Sigmoid colon (tissue), 7 donors: ENCODE measurements at regions of chr11 and their contacts with region 1.

Region 1: DNA sequence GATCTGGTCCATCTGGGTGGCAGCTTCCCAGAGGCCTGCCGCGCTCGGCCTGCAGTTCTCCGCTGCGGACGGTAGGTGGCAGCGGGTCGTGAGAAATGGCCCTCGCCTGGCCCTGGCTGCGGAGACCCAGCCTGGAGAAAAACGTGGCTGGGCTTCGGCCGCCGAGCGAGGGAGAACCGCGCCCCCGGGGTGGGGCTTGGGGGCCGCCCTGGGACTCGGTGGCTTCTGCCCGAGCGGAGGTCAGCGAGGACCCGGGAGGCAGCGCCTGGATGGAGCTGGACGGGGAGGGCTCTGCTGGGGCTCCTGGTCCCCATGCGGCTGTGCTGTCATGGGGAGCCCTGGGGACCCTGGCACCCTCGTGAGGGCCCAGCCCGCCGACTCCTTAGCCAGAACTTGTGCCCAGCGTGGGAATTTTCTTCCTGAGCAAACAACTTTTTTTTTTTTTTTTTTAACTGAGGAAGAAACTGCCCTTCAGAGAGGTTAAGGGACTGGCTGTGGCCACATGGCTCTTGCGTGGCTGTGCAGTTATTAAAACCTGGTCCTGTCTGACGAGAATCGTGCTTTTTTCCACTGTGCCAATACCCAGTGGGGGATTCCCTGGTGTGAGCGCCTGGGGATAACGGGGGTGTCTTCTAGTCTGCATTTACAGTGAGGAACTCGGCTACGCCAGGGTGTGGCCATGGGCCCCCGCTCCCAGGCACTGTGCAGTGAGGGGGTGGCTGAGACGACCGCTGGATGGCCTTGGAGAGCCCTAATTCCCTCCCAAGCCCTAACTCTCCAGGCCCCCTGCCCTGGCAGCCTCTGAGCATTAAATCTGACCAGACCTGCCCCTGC is 535.6 kb downstream of the INSC start:
- DNase-seq: peak; percentile 95
- H3K4me3 ChIP-seq: peak overlapping the region; percentile 20 to 50 (median 42)
- H3K27ac ChIP-seq: peak overlapping the region; percentile 52 to 62 (median 60)
- H3K4me1 ChIP-seq: peaks cover 0 to 14% (median 9%) of the 10 kb centered on the region in 4 donors
- H3K27me3 ChIP-seq: peaks cover 0 to 11% (median 0%) of the 10 kb centered on the region in 3 donors
- CTCF ChIP-seq: peak; percentile 92 to 96 (median 95)
- EP300 ChIP-seq: no peak
- POLR2A ChIP-seq: no peak

Region 2: DNA sequence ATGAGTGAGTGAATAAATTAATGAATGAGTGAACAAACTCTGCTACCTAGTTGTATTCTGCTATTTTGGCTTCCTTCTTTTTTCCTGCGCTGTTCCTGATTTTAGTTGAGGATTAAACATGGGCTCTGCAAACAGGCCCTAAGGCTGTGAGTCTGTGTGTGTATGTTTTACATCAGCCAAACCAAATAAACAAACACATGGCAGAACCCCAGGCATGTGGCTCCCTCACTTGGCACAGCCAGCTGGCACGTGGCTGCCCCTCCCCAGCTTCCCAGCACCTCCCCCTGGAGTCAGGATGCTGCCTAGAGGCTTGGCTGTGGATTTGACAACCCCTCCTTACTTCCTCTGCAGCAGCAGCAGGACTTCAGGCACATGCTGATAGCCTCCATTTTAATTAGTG is 57.6 kb after region 1 on chr11:
- intact Hi-C with region 1: no loop called
- DNase-seq: no peak
- H3K4me3 ChIP-seq: no peak overlapping the region
- H3K27ac ChIP-seq: no peak overlapping the region
- H3K4me1 ChIP-seq: peaks cover 0 to 11% (median 3%) of the 10 kb centered on the region in 4 donors
- H3K27me3 ChIP-seq: no peaks in the 10 kb centered on the region
- CTCF ChIP-seq: no peak
- EP300 ChIP-seq: no peak
- POLR2A ChIP-seq: no peak

Region 3: GRCh38 chr11:15742626-15743519 is 92.6 kb after region 1 on chr11:
- intact Hi-C with region 1: no loop called
- DNase-seq: no peak
- H3K4me3 ChIP-seq: no peak overlapping the region
- H3K27ac ChIP-seq: no peak overlapping the region
- H3K4me1 ChIP-seq: no peaks in the 10 kb centered on the region
- H3K27me3 ChIP-seq: no peaks in the 10 kb centered on the region
- CTCF ChIP-seq: no peak
- EP300 ChIP-seq: no peak
- POLR2A ChIP-seq: no peak

Region 4: DNA sequence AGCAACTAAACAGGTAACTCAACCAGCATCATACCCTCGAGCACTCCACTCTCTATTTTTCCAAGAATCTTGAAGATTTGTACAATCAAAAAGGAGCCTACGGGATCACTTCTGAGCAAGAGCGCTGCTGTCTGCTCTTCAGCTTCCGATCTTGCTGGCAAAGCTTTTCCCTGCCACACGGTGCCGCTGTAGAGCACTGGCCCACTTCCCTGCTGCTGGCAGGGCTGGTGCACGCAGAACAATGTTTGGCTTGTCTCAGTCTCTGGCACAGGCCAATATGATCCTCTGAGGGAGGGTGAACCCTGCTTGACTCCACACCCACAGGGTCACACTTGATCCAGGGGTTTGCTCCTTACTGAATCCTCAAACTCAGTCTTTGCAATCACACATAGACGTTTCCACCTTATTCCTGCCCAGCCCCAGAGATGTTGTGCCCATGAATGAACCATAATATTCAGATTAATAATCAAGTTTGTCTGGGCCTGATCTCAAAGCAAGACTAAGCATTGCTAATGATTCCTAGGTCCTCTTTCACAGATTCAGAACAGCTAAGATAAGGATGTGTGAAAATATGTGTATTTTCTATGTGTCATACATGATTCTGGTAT is 169.5 kb after region 1 on chr11:
- intact Hi-C with region 1: loop called (anchors 10 kb)
- DNase-seq: peak; percentile 77
- H3K4me3 ChIP-seq: no peak overlapping the region
- H3K27ac ChIP-seq: no peak overlapping the region
- H3K4me1 ChIP-seq: peaks cover 0 to 30% (median 24%) of the 10 kb centered on the region in 4 donors
- H3K27me3 ChIP-seq: no peaks in the 10 kb centered on the region
- CTCF ChIP-seq: peak; percentile 44 to 81 (median 78)
- EP300 ChIP-seq: no peak
- POLR2A ChIP-seq: no peak

Region 5: DNA sequence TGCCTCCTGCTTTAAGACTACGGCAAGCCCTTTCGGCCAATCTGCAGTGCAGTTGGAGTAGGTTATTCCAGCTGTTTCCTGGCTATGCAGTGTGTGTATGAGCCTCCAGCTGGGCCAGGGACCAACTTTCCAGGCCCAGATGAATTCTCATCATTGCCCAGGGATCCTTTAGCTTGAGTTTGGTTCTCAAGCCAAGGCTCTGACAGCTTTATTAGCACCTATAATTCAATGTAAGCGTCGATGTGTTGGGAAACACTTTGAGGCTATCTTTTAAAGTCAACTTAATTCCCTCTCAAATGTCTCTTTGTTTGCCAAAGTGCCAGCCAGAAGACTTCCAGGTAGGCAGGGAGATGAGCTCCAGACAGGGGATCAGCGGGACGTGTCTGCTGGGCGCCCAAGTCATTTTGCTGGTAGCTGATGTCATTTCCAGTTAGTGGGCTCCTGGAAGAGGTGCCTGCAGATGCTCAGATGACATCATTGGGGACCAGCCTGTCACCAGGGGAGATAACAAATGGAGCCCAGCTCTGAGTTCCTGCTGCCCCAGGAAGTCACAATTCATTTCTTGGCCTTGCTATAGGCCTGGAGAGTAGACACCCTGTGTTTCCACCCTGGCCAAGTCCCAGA is 185.6 kb after region 1 on chr11:
- intact Hi-C with region 1: loop called (anchors 10 kb)
- DNase-seq: peak; percentile 83
- H3K4me3 ChIP-seq: no peak overlapping the region
- H3K27ac ChIP-seq: peak overlapping the region in 3 of 4 donors; percentile 13 to 64 (median 47)
- H3K4me1 ChIP-seq: peaks cover 0 to 11% (median 5%) of the 10 kb centered on the region in 4 donors
- H3K27me3 ChIP-seq: peaks cover 0 to 19% (median 0%) of the 10 kb centered on the region in 3 donors
- CTCF ChIP-seq: no peak
- EP300 ChIP-seq: peak; percentile 27 to 88 (median 76)
- POLR2A ChIP-seq: no peak

Region 6: DNA sequence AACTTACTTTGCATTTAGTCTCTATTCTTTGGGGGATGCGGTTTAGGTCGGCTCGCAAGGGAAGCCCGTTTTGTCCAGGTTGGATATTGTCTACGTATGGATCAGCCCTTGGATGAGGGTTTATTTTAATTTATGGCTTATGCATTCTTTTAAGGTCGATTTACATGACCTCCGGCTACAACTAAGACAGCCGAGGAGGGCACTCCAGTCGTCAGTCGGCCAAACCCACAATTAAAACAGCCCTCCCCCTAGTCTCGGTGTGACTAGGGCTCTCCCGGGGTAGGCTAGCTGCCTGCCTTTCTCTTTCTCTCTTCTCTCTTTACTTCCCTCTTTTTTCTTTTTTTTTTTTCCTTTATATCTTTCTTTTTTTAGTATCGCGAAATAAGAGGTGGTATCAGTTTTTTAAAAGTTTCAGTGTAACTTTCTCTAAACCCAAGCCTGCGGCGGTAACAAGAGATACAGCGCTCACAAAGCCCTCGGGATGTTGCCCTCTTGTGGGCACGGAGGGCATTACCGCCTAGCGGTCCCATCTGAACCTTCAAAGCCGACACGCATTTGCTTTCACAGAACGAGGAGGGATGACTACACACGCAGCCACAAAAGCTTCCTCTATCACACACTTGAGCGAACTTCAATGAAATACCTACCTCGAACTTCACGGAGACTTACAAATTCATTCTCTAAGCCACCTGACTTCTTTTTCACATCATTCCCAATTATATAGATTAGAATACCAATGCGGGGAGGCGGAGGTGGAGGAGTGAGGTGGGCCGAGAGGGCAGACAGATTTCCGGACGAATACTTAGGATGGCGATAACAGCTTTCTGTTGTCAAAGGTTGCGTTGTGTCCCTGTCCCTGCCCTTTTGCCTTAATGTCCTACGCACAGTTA is 955.8 kb after region 1 on chr11:
- intact Hi-C with region 1: loop called (anchors 2 kb)
- DNase-seq: peak; percentile 91
- H3K4me3 ChIP-seq: peak overlapping the region; percentile 34 to 56 (median 48)
- H3K27ac ChIP-seq: peak overlapping the region; percentile 59 to 73 (median 67)
- H3K4me1 ChIP-seq: peaks cover 0 to 43% (median 39%) of the 10 kb centered on the region in 4 donors
- H3K27me3 ChIP-seq: peaks cover 46 to 99% (median 83%) of the 10 kb centered on the region in 3 donors
- CTCF ChIP-seq: peak; percentile 76 to 96 (median 86)
- EP300 ChIP-seq: no peak
- POLR2A ChIP-seq: peak in 1 of 2 donors; percentile 21

Region 7: GRCh38 chr11:16613512-16614381 is 963.4 kb after region 1 on chr11:
- intact Hi-C with region 1: loop called (anchors 2 kb)
- DNase-seq: peak; percentile 89
- H3K4me3 ChIP-seq: peak overlapping the region; percentile 12 to 38 (median 34)
- H3K27ac ChIP-seq: peak overlapping the region in 1 of 4 donors; percentile 21
- H3K4me1 ChIP-seq: peaks cover 0 to 18% (median 17%) of the 10 kb centered on the region in 4 donors
- H3K27me3 ChIP-seq: peaks cover 52 to 100% (median 88%) of the 10 kb centered on the region in 3 donors
- CTCF ChIP-seq: peak; percentile 58 to 86 (median 73)
- EP300 ChIP-seq: no peak
- POLR2A ChIP-seq: no peak

Region 8: GRCh38 chr11:16738193-16738946 is 1088.0 kb after region 1 on chr11 and contains the start of gene C11orf58:
- intact Hi-C with region 1: loop called (anchors 10 kb)
- DNase-seq: peak; percentile 96
- H3K4me3 ChIP-seq: peak within 1 kb of the TSS; percentile 58 to 87 (median 74)
- H3K27ac ChIP-seq: peak within 1 kb of the TSS; percentile 86 to 95 (median 92)
- H3K4me1 ChIP-seq: peaks cover 0 to 45% (median 41%) of the 10 kb centered on the region in 4 donors
- H3K27me3 ChIP-seq: no peaks in the 10 kb centered on the region
- CTCF ChIP-seq: no peak
- EP300 ChIP-seq: no peak
- POLR2A ChIP-seq: peak; percentile 80 to 81
- total RNA-seq, gene C11orf58: 136 to 222 (median 178) TPM